ENCODE measurements at regions of chr9 and their contacts with region 1.

Region 1: GRCh38 chr9:3508521-3509291 is 17.1 kb downstream of the RFX3 start:
- DNase-seq: peak; percentile 70
- H3K4me3 Mint-ChIP-seq: peak overlapping the region; percentile 71
- H3K27ac Mint-ChIP-seq: peak overlapping the region; percentile 89
- H3K4me1 Mint-ChIP-seq: peaks cover 17% of the 10 kb centered on the region
- H3K27me3 Mint-ChIP-seq: no peaks in the 10 kb centered on the region
- CTCF ChIP-seq: no peak

Region 2: DNA sequence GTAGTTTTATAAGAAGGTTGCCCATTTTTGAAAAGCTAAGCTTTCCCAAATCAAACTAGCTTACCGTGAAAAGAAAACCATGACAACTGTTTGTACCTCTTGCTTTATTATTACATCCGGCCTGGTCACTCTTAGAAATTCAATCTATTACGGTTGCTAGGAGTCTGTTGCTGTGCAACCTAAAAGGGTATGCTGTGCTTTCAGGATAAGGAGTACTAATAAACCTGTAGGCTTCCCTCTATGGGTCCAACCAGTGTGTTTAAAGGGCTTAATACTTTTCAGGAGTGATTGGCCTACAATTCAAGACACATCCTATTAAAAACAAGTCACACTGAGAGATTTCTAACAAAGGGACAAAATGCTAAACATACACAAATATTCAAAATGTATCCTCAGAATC is 10.0 kb before region 1 on chr9:
- CTCF ChIA-PET with region 1: interaction called, 6 read pairs
- POLR2A ChIA-PET with region 1: interaction called, 16 read pairs
- intact Hi-C with region 1: no loop called
- DNase-seq: no peak
- H3K4me3 Mint-ChIP-seq: no peak overlapping the region
- H3K27ac Mint-ChIP-seq: no peak overlapping the region
- H3K4me1 Mint-ChIP-seq: peaks cover 14% of the 10 kb centered on the region
- H3K27me3 Mint-ChIP-seq: no peaks in the 10 kb centered on the region
- CTCF ChIP-seq: no peak

Measured in MCF 10A (cell line).